Common myeloid progenitor, CD34-positive (primary cell): ENCODE measurements at regions of chr22 and their contacts with region 1.

Region 1: GRCh38 chr22:46006379-46007002 is 29.5 kb upstream of the WNT7B start:
- DNase-seq: peak; percentile 70 to 85 (median 81)
- H3K4me3 ChIP-seq: peak overlapping the region in 3 of 7 experiments; percentile 8 to 25 (median 11)
- H3K27ac ChIP-seq: no peak overlapping the region
- H3K4me1 ChIP-seq: peaks cover 0 to 39% (median 28%) of the 10 kb centered on the region in 4 experiments
- H3K27me3 ChIP-seq: no peaks in the 10 kb centered on the region

Region 2: DNA sequence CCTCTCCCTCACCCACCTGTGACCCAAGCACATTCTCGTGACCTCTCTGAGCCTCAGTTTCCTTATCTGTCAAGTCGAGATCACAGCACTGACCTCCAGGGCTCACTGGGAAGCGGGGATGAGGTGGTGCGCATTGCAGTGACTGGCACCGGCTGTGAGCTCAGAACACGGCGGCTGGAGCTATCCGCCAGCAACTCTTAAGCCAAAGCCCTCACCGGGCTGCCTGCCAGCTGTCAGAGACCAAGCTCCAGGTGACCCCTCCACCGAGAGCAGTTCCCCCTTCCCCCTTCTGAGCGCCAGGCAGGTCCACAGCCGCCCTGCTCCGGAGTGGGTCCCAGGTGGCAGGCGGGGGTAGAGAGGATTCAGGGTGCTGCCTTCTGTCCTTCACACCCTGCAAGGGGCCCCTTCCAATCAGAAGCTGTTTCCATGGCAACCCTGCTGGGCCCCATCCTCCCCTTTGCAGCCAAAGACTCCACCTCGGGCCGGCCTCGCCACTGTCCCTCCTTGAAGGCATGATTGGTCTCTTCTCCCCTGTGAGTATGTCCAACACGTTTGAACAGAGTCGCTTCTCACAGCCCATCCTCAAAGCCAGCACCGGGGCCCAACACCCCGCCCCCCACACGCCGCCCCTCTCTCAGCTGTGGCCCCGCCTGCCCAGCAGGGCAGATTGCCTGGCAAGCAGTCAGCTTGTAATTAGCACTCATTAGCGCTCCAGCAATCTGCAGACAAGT is 128.3 kb before region 1 on chr22:
- CTCF ChIA-PET with region 1: no interaction called
- POLR2A ChIA-PET with region 1: no interaction called
- DNase-seq: no peak
- H3K4me3 ChIP-seq: no peak overlapping the region
- H3K27ac ChIP-seq: no peak overlapping the region
- H3K4me1 ChIP-seq: peaks cover 0 to 11% (median 3%) of the 10 kb centered on the region in 4 experiments
- H3K27me3 ChIP-seq: peaks cover 0 to 84% (median 29%) of the 10 kb centered on the region in 5 experiments

Region 3: GRCh38 chr22:45968751-45969413 is 37.6 kb before region 1 on chr22:
- CTCF ChIA-PET with region 1: no interaction called
- POLR2A ChIA-PET with region 1: no interaction called
- DNase-seq: peak in 2 of 3 donors; percentile 48 to 52
- H3K4me3 ChIP-seq: no peak overlapping the region
- H3K27ac ChIP-seq: no peak overlapping the region
- H3K4me1 ChIP-seq: peaks cover 0 to 38% (median 24%) of the 10 kb centered on the region in 4 experiments
- H3K27me3 ChIP-seq: peaks cover 0 to 90% (median 33%) of the 10 kb centered on the region in 5 experiments

Region 4: DNA sequence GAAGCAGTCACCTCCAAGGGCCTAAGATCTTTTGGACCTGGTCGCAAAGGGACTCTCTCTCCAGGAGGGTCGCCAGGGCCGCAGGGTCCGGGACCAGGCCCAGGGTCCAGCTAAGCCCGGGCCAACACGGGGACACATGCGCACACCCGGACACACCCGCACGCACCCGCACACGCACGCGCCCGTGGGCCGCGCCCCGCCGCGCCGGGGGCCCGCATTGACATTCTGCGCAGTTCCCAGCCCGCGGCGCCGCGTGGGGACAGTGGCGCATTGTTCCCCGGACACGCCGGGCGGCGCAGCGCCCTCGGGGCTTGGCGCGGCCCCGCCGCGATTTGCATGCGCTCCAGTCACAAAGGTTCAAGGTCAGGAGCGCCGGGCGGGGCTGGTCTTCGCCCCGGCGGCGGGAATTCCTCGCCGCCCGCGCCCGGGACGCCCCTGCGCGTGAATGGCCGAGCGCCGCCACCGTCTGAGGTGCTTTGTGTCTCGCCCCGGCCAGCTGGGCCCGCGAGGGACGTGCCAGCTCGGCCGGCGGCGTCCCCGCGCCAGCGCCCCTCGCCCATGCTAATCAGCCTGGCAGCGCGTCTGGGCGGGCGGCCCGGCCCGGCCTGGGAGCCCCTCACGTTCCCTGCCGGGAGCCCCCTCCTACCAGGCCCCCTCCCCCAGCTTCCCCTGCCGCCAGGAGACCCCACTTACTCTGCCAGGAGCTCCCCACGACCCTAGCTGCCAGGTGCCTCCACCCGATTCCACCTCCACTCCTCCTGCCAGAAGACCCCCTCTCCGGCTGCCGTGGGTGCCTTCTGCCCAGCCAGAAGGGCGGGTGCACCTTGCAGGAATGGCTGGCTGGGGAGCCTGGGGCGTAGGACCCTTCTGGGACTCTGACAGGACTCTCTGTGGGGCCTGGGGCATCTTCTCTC is 21.0 kb after region 1 on chr22:
- CTCF ChIA-PET with region 1: interaction called, 50 read pairs
- POLR2A ChIA-PET with region 1: no interaction called
- DNase-seq: peak in 1 of 3 donors; percentile 43
- H3K4me3 ChIP-seq: peak overlapping the region in 5 of 7 experiments; percentile 8 to 71 (median 43)
- H3K27ac ChIP-seq: no peak overlapping the region
- H3K4me1 ChIP-seq: peaks cover 0 to 56% (median 39%) of the 10 kb centered on the region in 4 experiments
- H3K27me3 ChIP-seq: peaks cover 0 to 13% (median 0%) of the 10 kb centered on the region in 5 experiments

Region 5: GRCh38 chr22:46044621-46045438 is 38.3 kb after region 1 on chr22:
- CTCF ChIA-PET with region 1: interaction called, 19 read pairs
- POLR2A ChIA-PET with region 1: no interaction called
- DNase-seq: no peak
- H3K4me3 ChIP-seq: peak overlapping the region; percentile 35 to 83 (median 63)
- H3K27ac ChIP-seq: peak overlapping the region; percentile 68 to 76
- H3K4me1 ChIP-seq: peaks cover 0 to 72% (median 25%) of the 10 kb centered on the region in 4 experiments
- H3K27me3 ChIP-seq: peaks cover 0 to 15% (median 0%) of the 10 kb centered on the region in 5 experiments

Region 6: DNA sequence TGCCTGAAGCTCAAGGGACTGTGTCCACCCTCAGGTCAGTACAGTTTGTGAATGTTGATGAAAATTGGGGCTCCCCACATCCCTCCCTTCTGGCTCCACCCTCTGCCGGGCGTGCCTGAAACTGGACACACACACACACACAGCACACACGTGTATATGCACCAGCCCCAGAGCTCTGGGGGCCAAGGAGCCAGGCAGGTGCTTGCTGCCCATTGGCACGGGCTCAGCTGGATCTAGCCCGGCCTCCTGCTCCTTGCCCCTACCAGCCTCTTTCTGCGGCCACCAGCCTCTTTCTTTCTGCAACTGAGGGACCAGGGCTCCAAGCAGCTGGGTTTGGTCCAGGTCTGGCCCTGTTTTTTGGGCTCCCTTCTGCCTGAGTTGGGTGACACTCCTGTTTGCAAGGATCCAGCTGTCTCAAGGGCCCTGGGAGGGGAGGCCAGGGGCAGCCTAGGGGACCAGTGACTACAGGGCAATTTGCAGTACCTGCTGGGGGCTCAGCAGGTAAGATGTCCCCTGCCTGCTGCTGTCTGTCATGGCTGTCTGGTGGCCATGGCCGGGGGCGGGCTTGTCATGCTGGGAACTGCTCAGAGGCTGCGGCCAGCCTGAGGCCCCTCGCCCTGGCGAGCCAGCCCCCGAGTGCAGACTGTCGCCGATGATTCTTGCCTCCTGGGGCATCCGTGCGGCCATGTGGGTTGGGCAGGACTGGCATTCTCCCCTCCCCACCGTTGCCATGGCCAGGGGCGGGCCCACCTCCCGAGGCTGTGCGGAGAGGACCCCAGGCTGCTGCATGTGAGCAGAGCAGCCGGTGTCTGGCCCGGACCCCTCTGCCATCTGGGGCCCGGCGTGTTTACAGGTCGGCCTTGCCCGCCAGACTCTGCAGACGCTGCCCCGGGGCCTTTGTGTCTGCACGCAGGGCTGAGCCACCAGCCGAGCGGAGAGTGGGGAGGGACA is 92.3 kb after region 1 on chr22:
- CTCF ChIA-PET with region 1: interaction called, 10 read pairs
- POLR2A ChIA-PET with region 1: no interaction called
- DNase-seq: no peak
- H3K4me3 ChIP-seq: no peak overlapping the region
- H3K27ac ChIP-seq: no peak overlapping the region
- H3K4me1 ChIP-seq: no peaks in the 10 kb centered on the region
- H3K27me3 ChIP-seq: peaks cover 0 to 2% (median 0%) of the 10 kb centered on the region in 5 experiments

Region 7: DNA sequence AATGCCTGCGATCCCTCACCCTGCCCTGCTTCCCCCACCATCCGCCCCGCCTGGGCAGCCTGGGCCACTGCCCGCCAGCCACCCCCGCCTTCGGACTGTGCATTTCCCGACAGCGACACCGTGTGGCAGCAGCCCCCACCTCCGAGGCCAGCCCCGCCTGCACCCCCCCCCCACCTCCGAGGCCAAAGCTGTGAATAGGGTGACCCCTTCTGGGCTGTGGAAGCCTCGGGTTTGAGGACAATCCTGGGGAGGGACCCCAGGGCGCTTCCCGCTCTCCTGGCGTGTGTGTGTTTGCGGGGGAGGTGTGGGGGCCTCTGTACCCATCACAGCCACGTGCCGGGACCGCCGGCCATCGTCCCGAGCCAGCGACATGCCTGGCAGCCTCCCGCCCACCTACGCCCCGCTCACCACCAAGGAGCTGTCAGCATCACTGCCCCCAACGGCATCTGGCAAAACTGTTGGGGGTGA is 110.0 kb after region 1 on chr22:
- CTCF ChIA-PET with region 1: interaction called, 198 read pairs
- POLR2A ChIA-PET with region 1: interaction called, 6 read pairs
- DNase-seq: peak; percentile 79 to 90 (median 87)
- H3K4me3 ChIP-seq: no peak overlapping the region
- H3K27ac ChIP-seq: no peak overlapping the region
- H3K4me1 ChIP-seq: peaks cover 0 to 22% (median 14%) of the 10 kb centered on the region in 4 experiments
- H3K27me3 ChIP-seq: no peaks in the 10 kb centered on the region